ENCODE measurements at regions of chr12 and their contacts with region 1.

Region 1: DNA sequence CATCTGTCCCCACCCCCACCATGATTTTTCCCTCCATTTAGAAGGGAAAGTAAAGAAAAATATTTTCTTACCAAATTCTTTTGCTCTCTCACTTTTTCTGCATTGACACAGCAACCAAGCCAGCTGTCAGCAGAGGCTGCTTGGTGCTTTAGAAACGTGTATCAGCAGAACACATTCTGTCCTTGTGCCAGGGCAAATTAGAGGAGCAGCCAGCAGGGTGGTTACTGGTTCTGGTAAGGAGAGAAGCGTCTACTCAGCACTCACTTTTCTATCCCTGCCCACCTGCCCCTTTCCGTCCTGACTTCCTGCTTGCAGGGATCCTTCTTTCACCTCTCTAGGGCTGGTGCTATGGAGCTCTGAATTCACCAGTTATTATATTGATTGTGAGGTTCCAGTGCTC is 327.5 kb upstream of the PDE3A start:
- DNase-seq: no peak
- H3K4me3 ChIP-seq: no peak overlapping the region
- H3K27ac ChIP-seq: no peak overlapping the region
- H3K27me3 ChIP-seq: no peaks in the 10 kb centered on the region
- CTCF ChIP-seq: no peak

Region 2: GRCh38 chr12:19779393-19780056 is 261.3 kb before region 1 on chr12:
- CTCF ChIA-PET with region 1: no interaction called
- POLR2A ChIA-PET with region 1: interaction called, 10 read pairs
- DNase-seq: no peak
- H3K4me3 ChIP-seq: no peak overlapping the region
- H3K27ac ChIP-seq: no peak overlapping the region
- H3K27me3 ChIP-seq: no peaks in the 10 kb centered on the region
- CTCF ChIP-seq: no peak

Region 3: DNA sequence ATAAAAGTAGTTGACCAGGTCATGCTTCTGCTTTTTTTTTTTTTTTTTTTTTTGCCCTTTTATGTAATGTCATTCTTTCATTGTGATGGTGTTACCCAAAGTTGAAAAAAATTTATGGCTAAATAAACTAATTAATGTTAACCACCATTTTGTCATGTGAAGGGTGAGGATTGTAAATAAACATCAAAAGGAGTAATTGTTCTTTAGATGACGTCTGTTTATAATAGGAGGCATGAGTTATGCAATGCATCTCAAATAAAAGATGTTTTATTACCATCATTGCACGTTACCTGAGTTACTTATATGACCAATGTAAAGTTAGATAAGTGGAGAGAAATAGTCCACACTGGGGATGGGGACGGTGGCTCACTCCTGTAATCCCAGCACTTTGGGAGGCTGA is 22.4 kb before region 1 on chr12:
- CTCF ChIA-PET with region 1: no interaction called
- POLR2A ChIA-PET with region 1: no interaction called
- DNase-seq: no peak
- H3K4me3 ChIP-seq: no peak overlapping the region
- H3K27ac ChIP-seq: no peak overlapping the region
- H3K27me3 ChIP-seq: no peaks in the 10 kb centered on the region
- CTCF ChIP-seq: no peak

Measured in AG04450 (cell line).